Ovary (tissue), 10 donors: ENCODE measurements at regions of chr5 and their contacts with region 1.

Region 1: DNA sequence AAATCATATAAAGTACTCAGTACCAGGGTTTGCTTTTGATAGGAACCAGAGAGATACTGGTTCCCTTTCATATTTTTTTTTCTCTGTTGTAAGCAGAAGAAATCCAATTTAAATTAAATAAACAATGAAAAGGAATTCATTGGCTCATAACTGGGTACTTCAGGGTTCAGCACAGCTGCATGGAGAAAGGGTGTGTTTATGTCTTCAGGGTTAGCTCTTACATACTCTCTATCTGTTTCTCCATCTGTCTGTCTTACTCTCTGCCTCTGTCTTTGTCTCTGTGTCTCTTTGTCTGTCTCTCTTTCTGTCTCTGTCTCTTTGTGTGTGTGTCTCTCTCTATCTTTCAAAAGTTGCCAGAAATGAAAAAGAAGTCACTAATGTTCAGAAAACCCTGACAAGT is 345.9 kb downstream of the MSX2 start:
- DNase-seq: no peak
- H3K4me3 ChIP-seq: no peak overlapping the region
- H3K27ac ChIP-seq: no peak overlapping the region
- H3K4me1 ChIP-seq: no peaks in the 10 kb centered on the region
- H3K27me3 ChIP-seq: no peaks in the 10 kb centered on the region
- CTCF ChIP-seq: no peak
- EP300 ChIP-seq: no peak
- POLR2A ChIP-seq: no peak

Region 2: DNA sequence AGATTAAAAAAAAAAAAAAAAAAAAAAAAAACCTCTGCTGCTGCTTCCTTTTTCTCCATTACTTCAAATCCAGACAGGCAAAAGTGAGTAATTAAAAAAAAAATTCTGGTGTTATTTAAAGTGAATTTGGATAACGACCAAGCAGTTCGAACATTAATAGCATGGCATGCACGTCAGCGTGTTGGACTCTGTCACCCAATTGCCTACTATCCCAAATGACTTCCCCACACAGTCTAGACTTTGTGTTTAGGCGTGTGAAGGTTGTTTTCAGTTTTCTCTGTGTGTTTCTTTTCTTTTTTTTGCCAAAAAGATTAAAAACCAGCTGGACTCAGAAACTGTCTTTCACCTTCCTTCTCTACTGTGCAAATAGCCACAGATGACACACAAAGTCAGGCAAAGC is 24.5 kb before region 1 on chr5:
- intact Hi-C with region 1: no loop called
- DNase-seq: no peak
- H3K4me3 ChIP-seq: no peak overlapping the region
- H3K27ac ChIP-seq: no peak overlapping the region
- H3K4me1 ChIP-seq: no peaks in the 10 kb centered on the region
- H3K27me3 ChIP-seq: no peaks in the 10 kb centered on the region
- CTCF ChIP-seq: no peak
- EP300 ChIP-seq: no peak
- POLR2A ChIP-seq: no peak

Region 3: DNA sequence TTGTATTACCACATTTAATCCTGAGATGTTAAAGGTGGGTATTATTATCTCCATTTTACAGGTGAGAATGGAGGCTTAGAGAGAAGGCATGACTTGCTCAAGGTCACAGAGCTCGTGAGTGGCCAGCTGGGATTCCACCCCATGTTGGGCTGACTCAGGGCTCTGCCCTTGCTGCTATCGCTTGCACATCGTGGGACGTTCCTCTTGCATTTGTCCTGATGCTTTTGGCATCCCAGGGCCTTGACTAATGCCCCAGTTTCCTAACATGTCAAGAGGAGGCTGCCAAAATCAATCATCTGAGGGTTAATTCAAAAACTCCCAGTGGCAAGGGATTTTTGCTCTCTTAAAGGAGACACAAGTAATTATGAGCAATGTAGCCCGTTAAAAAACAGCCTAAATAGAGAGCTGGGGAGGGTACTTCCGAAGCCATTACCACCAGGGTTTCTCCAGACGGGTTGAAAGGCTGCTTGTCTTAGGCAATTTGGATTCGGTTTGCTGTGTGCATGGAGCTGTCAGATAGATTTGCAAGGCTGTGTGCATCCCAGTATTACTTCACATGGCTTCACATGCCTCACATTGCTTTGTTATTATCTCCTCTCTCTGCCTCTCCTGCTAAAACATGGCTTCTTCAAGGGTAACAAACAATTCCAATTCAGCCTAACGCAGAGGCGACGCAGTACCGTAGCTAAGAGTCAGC is 26.3 kb after region 1 on chr5:
- intact Hi-C with region 1: loop called in 1 of 4 experiments (anchors 1 kb)
- DNase-seq: no peak
- H3K4me3 ChIP-seq: no peak overlapping the region
- H3K27ac ChIP-seq: no peak overlapping the region
- H3K4me1 ChIP-seq: no peaks in the 10 kb centered on the region
- H3K27me3 ChIP-seq: no peaks in the 10 kb centered on the region
- CTCF ChIP-seq: no peak
- EP300 ChIP-seq: no peak
- POLR2A ChIP-seq: no peak

Region 4: DNA sequence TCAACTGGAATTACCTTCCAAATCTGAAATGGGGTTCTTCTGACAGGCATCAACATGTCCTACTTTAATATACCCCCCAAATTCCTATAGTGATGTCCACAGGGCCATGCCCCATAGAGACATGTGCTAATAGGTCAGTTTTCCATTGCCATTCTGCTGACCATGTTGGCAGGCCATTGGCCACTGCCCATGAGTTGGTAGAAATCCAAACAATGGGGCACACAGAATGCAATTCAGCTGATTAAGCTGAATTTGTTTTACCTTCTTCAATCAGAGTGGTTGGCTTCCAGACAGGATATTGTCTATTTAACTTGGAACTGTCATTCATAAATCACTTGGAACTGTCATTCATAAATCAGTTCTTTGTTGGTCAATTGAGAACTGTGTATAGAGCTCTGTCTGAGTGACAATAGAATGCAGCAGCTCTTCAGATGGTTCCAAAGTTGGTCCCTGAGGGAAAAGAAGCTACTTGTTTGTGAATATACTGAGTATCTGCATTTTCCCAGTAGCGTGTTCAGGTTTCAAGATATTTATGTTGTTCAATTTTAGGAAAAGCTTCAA is 36.8 kb after region 1 on chr5:
- intact Hi-C with region 1: no loop called
- DNase-seq: no peak
- H3K4me3 ChIP-seq: no peak overlapping the region
- H3K27ac ChIP-seq: no peak overlapping the region
- H3K4me1 ChIP-seq: no peaks in the 10 kb centered on the region
- H3K27me3 ChIP-seq: no peaks in the 10 kb centered on the region
- CTCF ChIP-seq: no peak
- EP300 ChIP-seq: no peak
- POLR2A ChIP-seq: no peak

Region 5: GRCh38 chr5:175617447-175617846 is 547.2 kb after region 1 on chr5:
- intact Hi-C with region 1: no loop called
- DNase-seq: no peak
- H3K4me3 ChIP-seq: no peak overlapping the region
- H3K27ac ChIP-seq: no peak overlapping the region
- H3K4me1 ChIP-seq: no peaks in the 10 kb centered on the region
- H3K27me3 ChIP-seq: no peaks in the 10 kb centered on the region
- CTCF ChIP-seq: no peak
- EP300 ChIP-seq: no peak
- POLR2A ChIP-seq: no peak